ENCODE measurements at regions of chr10 and their contacts with region 1.

Region 1: GRCh38 chr10:101779544-101780186 is 3.6 kb downstream of the NPM3 start:
- DNase-seq: peak; percentile 65 to 82
- H3K4me3 ChIP-seq: peak overlapping the region; percentile 20 to 40
- H3K27ac ChIP-seq: no peak overlapping the region
- H3K4me1 ChIP-seq: peaks cover 4 to 68% (median 51%) of the 10 kb centered on the region in 4 donors
- H3K27me3 ChIP-seq: peaks cover 0 to 61% of the 10 kb centered on the region in 2 donors
- CTCF ChIP-seq: peak; percentile 71 to 89

Region 2: GRCh38 chr10:101165736-101166135 is 613.9 kb before region 1 on chr10:
- intact Hi-C with region 1: no loop called
- DNase-seq: no peak
- H3K4me3 ChIP-seq: no peak overlapping the region
- H3K27ac ChIP-seq: no peak overlapping the region
- H3K4me1 ChIP-seq: peaks cover 0 to 5% (median 4%) of the 10 kb centered on the region in 4 donors
- H3K27me3 ChIP-seq: peaks cover 0 to 75% of the 10 kb centered on the region in 2 donors
- CTCF ChIP-seq: no peak

Region 3: GRCh38 chr10:101587725-101588653 is 191.7 kb before region 1 on chr10 and contains the starts of genes DPCD and POLL:
- intact Hi-C with region 1: loop called (anchors 10 kb)
- DNase-seq: peak; percentile 98 to 99
- H3K4me3 ChIP-seq: peak within 1 kb of the TSS; percentile 83 to 95
- H3K27ac ChIP-seq: peak within 1 kb of the TSS; percentile 74 to 76
- H3K4me1 ChIP-seq: peaks cover 0 to 23% (median 16%) of the 10 kb centered on the region in 4 donors
- H3K27me3 ChIP-seq: no peaks in the 10 kb centered on the region
- CTCF ChIP-seq: no peak